Panc1 (cell line): ENCODE measurements at regions of chr9 and their contacts with region 1.

Region 1: GRCh38 chr9:126673689-126674364 is 60.1 kb downstream of the LMX1B start:
- DNase-seq: no peak
- ATAC-seq: peak; percentile 44
- H3K4me3 ChIP-seq: no peak overlapping the region
- H3K27ac ChIP-seq: no peak overlapping the region
- H3K4me1 ChIP-seq: no peaks in the 10 kb centered on the region
- H3K27me3 ChIP-seq: no peaks in the 10 kb centered on the region
- CTCF ChIP-seq: no peak

Region 2: GRCh38 chr9:126733005-126733404 is 59.2 kb after region 1 on chr9:
- CTCF ChIA-PET with region 1: no interaction called
- POLR2A ChIA-PET with region 1: interaction called, 10 read pairs
- in situ Hi-C with region 1: no loop called
- intact Hi-C with region 1: no loop called
- DNase-seq: no peak
- ATAC-seq: no peak
- H3K4me3 ChIP-seq: no peak overlapping the region
- H3K27ac ChIP-seq: no peak overlapping the region
- H3K4me1 ChIP-seq: no peaks in the 10 kb centered on the region
- H3K27me3 ChIP-seq: no peaks in the 10 kb centered on the region; the same call in 1 of the 2 replicates
- CTCF ChIP-seq: no peak